Natural killer cell (primary cell): ENCODE measurements at regions of chr22 and their contacts with region 1.

Region 1: GRCh38 chr22:23128269-23129108 is 13.3 kb downstream of the RSPH14 start:
- DNase-seq: peak; percentile 71 to 86
- ATAC-seq: peak; percentile 83 to 98 (median 96)
- H3K4me3 ChIP-seq: no peak overlapping the region
- H3K4me3 Mint-ChIP-seq: no peak overlapping the region
- H3K27ac ChIP-seq: no peak overlapping the region
- H3K27ac Mint-ChIP-seq: peak overlapping the region in 1 of 2 donors; percentile 75
- H3K4me1 ChIP-seq: peaks cover 10% of the 10 kb centered on the region
- H3K4me1 Mint-ChIP-seq: peaks cover 6 to 7% of the 10 kb centered on the region in 2 donors
- H3K27me3 ChIP-seq: no peaks in the 10 kb centered on the region
- H3K27me3 Mint-ChIP-seq: no peaks in the 10 kb centered on the region
- CTCF ChIP-seq: peak; percentile 81

Region 2: DNA sequence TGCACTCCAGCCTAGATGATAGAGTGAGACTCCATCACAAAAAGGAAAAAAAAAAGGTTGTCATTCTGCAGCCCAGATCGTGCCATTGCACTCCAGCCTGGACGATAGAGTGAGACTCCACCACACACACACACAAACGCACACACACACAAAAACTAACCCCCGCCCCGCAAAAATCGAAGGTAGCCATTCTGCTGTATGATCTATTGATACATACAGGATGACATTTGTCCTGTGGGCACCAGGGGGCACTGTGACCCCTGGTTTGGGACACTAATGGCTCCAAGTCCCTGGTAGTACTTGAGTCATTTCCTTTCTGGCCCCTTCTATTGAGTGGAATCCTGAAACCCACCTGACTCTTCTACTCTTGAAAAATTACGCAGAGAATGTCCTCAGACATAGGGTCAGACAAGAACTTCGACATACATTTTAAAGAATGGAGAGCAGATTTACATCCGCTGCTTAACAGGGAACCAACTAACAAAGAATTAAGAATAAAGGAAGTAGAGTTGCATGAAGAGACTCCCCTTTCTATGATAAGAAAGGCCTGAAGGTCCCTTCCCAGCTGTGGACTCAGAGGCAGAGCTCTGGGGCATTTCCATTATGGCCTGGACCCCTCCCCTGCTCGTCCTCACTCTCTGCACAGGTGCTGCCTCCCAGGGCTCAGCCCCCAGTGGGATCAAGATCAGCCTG is 534.4 kb before region 1 on chr22:
- intact Hi-C with region 1: loop called (anchors 10 kb)
- DNase-seq: peak; percentile 50 to 80
- ATAC-seq: peak; percentile 67 to 88 (median 82)
- H3K4me3 ChIP-seq: no peak overlapping the region
- H3K4me3 Mint-ChIP-seq: no peak overlapping the region
- H3K27ac ChIP-seq: no peak overlapping the region
- H3K27ac Mint-ChIP-seq: no peak overlapping the region
- H3K4me1 ChIP-seq: no peaks in the 10 kb centered on the region
- H3K4me1 Mint-ChIP-seq: peaks cover 6% of the 10 kb centered on the region in 2 donors
- H3K27me3 ChIP-seq: no peaks in the 10 kb centered on the region
- H3K27me3 Mint-ChIP-seq: peaks cover 0 to 4% of the 10 kb centered on the region in 2 donors
- CTCF ChIP-seq: peak; percentile 76

Region 3: GRCh38 chr22:23385291-23386244 is 257.1 kb after region 1 on chr22:
- intact Hi-C with region 1: loop called (anchors 1 kb)
- DNase-seq: peak; percentile 80 to 89
- ATAC-seq: peak; percentile 74 to 97 (median 92)
- H3K4me3 ChIP-seq: no peak overlapping the region
- H3K4me3 Mint-ChIP-seq: no peak overlapping the region
- H3K27ac ChIP-seq: no peak overlapping the region
- H3K27ac Mint-ChIP-seq: no peak overlapping the region
- H3K4me1 ChIP-seq: peaks cover 3% of the 10 kb centered on the region
- H3K4me1 Mint-ChIP-seq: peaks cover 6 to 8% of the 10 kb centered on the region in 2 donors
- H3K27me3 ChIP-seq: no peaks in the 10 kb centered on the region
- H3K27me3 Mint-ChIP-seq: peaks cover 0 to 6% of the 10 kb centered on the region in 2 donors
- CTCF ChIP-seq: peak; percentile 96